Endothelial cell of umbilical vein (primary cell): ENCODE measurements at regions of chr4 and their contacts with region 1.

Region 1: GRCh38 chr4:102449751-102450352 is 51.3 kb upstream of the NFKB1 start:
- DNase-seq: peak; percentile 74
- H3K4me3 ChIP-seq: no peak overlapping the region
- H3K27ac ChIP-seq: no peak overlapping the region
- H3K4me1 ChIP-seq: no peaks in the 10 kb centered on the region
- H3K27me3 ChIP-seq: no peaks in the 10 kb centered on the region
- CTCF ChIP-seq: peak; percentile 40 to 58
- POLR2A ChIP-seq: no peak

Region 2: DNA sequence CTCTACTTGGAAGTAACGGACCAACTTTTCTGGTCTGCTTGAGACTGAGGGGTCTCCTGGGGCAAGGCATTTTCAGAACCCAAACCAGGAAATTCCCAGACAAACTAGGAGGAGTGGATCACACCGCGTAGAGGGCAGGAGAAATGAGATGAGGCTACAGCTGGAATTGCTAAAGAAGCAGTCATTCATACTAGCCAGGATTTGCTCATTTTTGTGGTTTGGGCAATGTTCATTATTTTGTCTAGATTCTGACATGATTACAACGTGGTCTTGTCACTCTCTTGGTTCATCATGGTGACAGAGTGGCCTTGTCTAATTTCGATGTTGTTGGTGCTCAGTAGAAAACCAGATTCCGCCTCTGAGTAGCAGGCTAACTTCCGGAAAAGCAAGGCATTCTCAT is 596.2 kb before region 1 on chr4:
- CTCF ChIA-PET with region 1: no interaction called
- POLR2A ChIA-PET with region 1: no interaction called
- dilution Hi-C with region 1: no loop called
- intact Hi-C with region 1: no loop called
- DNase-seq: no peak
- H3K4me3 ChIP-seq: no peak overlapping the region
- H3K27ac ChIP-seq: no peak overlapping the region
- H3K4me1 ChIP-seq: no peaks in the 10 kb centered on the region
- H3K27me3 ChIP-seq: no peaks in the 10 kb centered on the region
- CTCF ChIP-seq: no peak
- POLR2A ChIP-seq: no peak

Region 3: GRCh38 chr4:102114123-102114630 is 335.7 kb before region 1 on chr4:
- CTCF ChIA-PET with region 1: no interaction called
- POLR2A ChIA-PET with region 1: no interaction called
- dilution Hi-C with region 1: no loop called
- intact Hi-C with region 1: no loop called
- DNase-seq: peak; percentile 11
- H3K4me3 ChIP-seq: no peak overlapping the region
- H3K27ac ChIP-seq: no peak overlapping the region
- H3K4me1 ChIP-seq: no peaks in the 10 kb centered on the region
- H3K27me3 ChIP-seq: no peaks in the 10 kb centered on the region
- CTCF ChIP-seq: no peak
- POLR2A ChIP-seq: no peak

Region 4: DNA sequence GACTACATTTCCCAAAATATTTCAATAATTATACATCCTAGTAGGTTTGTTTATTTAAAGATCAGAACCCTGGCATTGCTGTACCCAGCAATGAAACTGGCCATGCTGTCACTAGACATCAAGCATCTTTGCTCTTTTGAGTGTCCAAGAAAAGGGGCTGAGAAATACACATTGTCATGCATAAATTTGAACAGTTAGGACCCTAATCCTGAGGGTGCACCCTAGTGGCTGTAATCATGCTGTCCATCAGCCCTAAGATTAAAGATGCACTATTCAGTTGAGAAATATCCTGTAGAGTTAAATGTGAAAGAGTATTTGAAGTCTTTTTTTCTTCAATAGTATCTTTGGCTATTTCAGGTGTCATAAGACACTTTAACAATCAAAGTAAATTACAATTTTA is 160.2 kb after region 1 on chr4:
- CTCF ChIA-PET with region 1: interaction called, 8 read pairs
- POLR2A ChIA-PET with region 1: no interaction called
- dilution Hi-C with region 1: no loop called
- intact Hi-C with region 1: loop called (anchors 1 kb)
- DNase-seq: peak; percentile 18
- H3K4me3 ChIP-seq: no peak overlapping the region
- H3K27ac ChIP-seq: no peak overlapping the region
- H3K4me1 ChIP-seq: peaks cover 25% of the 10 kb centered on the region
- H3K27me3 ChIP-seq: no peaks in the 10 kb centered on the region
- CTCF ChIP-seq: peak; percentile 18 to 25
- POLR2A ChIP-seq: no peak

Region 5: GRCh38 chr4:102764901-102765300 is 315.0 kb after region 1 on chr4:
- CTCF ChIA-PET with region 1: no interaction called
- POLR2A ChIA-PET with region 1: no interaction called
- dilution Hi-C with region 1: no loop called
- intact Hi-C with region 1: no loop called
- DNase-seq: no peak
- H3K4me3 ChIP-seq: no peak overlapping the region
- H3K27ac ChIP-seq: no peak overlapping the region
- H3K4me1 ChIP-seq: peaks cover 15% of the 10 kb centered on the region
- H3K27me3 ChIP-seq: peaks cover 0 to 2% of the 10 kb centered on the region in 2 experiments
- CTCF ChIP-seq: no peak
- POLR2A ChIP-seq: no peak

Region 6: GRCh38 chr4:103244246-103244645 is 794.4 kb after region 1 on chr4:
- CTCF ChIA-PET with region 1: no interaction called
- POLR2A ChIA-PET with region 1: no interaction called
- dilution Hi-C with region 1: no loop called
- intact Hi-C with region 1: no loop called
- DNase-seq: no peak
- H3K4me3 ChIP-seq: no peak overlapping the region
- H3K27ac ChIP-seq: no peak overlapping the region
- H3K4me1 ChIP-seq: no peaks in the 10 kb centered on the region
- H3K27me3 ChIP-seq: no peaks in the 10 kb centered on the region
- CTCF ChIP-seq: no peak
- POLR2A ChIP-seq: no peak